Aorta (tissue), 5 donors: ENCODE measurements at regions of chr13 and their contacts with region 1.

Region 1: GRCh38 chr13:51803422-51804294 is at the start of gene DHRS12:
- DNase-seq: peak; percentile 95 to 97
- ATAC-seq: peak; percentile 93
- H3K4me3 ChIP-seq: peak within 1 kb of the TSS; percentile 61 to 62
- H3K27ac ChIP-seq: peak within 1 kb of the TSS; percentile 94 to 96
- H3K4me1 ChIP-seq: peaks cover 2 to 6% of the 10 kb centered on the region in 2 donors
- H3K27me3 ChIP-seq: no peaks in the 10 kb centered on the region
- total RNA-seq, gene DHRS12: 11.8 to 13.5 TPM

Region 2: GRCh38 chr13:51444922-51445321 is 358.7 kb before region 1 on chr13:
- intact Hi-C with region 1: loop called (anchors 5 to 10 kb)
- DNase-seq: no peak
- ATAC-seq: no peak
- H3K4me3 ChIP-seq: no peak overlapping the region
- H3K27ac ChIP-seq: no peak overlapping the region
- H3K4me1 ChIP-seq: peaks cover 0 to 3% of the 10 kb centered on the region in 2 donors
- H3K27me3 ChIP-seq: no peaks in the 10 kb centered on the region

Region 3: DNA sequence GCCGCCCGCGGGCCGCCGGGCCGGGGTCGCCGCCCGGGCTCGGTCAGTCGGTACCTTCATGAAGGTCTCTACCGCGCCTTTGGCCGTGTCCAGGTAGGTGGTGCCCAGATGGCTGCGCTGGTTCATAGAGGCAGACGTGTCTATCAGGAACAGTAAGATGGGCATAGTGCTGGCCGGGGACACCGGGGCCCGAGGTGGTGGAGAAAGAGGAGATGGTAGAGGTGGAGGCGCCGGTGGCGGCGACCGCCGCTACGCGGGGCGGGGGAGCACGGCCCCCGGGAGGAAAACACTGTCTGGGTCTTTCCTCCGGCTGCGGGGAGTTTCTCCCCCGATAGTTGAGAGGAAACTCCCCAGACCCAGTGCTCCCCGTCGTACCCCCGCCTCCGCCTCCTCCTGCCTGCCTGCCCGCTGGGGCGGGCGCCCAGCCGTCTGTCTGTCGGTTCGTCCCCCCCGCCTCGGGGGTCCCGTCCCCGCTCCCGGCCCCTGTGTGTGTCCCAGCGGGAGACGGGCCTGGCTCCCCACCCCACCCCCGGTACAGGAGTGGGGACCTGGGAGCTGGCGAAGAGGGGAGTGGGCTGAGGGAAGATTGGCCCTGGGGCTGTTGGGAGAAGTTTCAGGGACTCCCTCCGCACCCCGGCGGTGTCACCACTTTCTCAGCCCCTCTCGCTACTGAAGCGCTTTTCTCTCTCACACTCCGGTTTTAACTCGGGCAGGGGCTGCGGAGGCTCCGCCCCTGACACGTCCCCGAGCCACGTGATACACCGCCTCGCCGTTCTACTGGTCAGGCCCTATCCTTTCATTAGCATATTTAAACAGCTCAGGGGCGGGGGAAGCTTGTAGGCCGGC is 351.1 kb before region 1 on chr13 and contains the start of gene INTS6:
- intact Hi-C with region 1: loop called (anchors 5 to 10 kb)
- DNase-seq: peak; percentile 99
- ATAC-seq: peak; percentile 97
- H3K4me3 ChIP-seq: peak within 1 kb of the TSS; percentile 79 to 100
- H3K27ac ChIP-seq: peak within 1 kb of the TSS; percentile 88 to 100
- H3K4me1 ChIP-seq: peaks cover 0 to 3% of the 10 kb centered on the region in 2 donors
- H3K27me3 ChIP-seq: peaks cover 0 to 2% of the 10 kb centered on the region in 2 donors
- total RNA-seq, gene INTS6: 38.1 to 51.6 TPM

Region 4: DNA sequence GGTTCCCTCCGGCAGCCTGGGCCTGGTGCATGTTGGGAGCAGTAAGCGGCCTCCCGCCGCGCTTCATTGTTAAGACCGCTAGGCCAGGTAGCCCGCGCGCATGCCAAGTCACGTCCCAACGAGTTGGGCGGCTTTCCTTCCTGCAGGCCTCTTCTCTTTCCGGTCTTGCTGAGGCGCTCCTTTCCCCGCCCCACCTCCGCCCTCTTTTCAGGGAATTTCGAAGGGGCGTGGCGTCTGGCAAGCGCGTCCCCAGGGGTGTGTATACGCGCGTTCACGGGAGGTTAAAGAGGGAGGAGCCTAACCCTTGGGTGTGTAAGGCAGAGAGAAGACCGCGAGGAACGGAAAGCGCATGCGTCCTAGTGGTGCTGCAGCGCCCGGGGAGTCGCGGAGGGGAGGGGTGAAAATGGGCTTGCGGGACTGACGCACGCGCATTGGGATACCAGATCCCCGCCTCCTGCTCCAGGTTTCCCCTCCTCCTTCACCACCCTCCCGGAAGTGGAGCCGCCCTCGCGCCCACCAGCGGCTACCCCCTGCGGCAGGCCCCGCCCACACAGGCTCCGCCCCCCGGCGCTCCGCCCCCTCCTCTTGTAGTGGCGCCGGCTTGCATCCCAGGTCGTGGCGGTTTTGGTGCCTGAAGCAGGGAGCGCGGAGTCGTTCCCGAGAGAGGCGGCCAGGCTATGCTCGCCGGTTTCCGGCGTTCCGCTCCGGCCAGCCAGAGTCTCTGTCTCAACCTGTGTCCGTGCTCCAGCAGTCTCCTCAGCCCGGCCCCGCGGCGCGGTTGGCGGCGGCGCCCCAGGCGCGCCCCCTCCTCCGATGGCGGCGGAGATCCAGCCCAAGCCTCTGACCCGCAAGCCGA is 219.6 kb before region 1 on chr13 and contains the start of gene WDFY2:
- intact Hi-C with region 1: loop called (anchors 2 to 5 kb)
- DNase-seq: peak; percentile 100
- ATAC-seq: peak; percentile 98
- H3K4me3 ChIP-seq: peak within 1 kb of the TSS; percentile 38 to 95
- H3K27ac ChIP-seq: peak within 1 kb of the TSS; percentile 49 to 76
- H3K4me1 ChIP-seq: peaks cover 0 to 5% of the 10 kb centered on the region in 2 donors
- H3K27me3 ChIP-seq: no peaks in the 10 kb centered on the region
- total RNA-seq, gene WDFY2: 15.3 to 24.4 TPM

Region 5: GRCh38 chr13:51764184-51765141 is 39.2 kb before region 1 on chr13:
- intact Hi-C with region 1: loop called in 1 of 2 experiments (anchors 5 kb)
- DNase-seq: peak; percentile 75 to 78
- ATAC-seq: peak; percentile 92
- H3K4me3 ChIP-seq: no peak overlapping the region
- H3K27ac ChIP-seq: peak overlapping the region in 1 of 2 donors; percentile 94
- H3K4me1 ChIP-seq: no peaks in the 10 kb centered on the region
- H3K27me3 ChIP-seq: no peaks in the 10 kb centered on the region

Region 6: DNA sequence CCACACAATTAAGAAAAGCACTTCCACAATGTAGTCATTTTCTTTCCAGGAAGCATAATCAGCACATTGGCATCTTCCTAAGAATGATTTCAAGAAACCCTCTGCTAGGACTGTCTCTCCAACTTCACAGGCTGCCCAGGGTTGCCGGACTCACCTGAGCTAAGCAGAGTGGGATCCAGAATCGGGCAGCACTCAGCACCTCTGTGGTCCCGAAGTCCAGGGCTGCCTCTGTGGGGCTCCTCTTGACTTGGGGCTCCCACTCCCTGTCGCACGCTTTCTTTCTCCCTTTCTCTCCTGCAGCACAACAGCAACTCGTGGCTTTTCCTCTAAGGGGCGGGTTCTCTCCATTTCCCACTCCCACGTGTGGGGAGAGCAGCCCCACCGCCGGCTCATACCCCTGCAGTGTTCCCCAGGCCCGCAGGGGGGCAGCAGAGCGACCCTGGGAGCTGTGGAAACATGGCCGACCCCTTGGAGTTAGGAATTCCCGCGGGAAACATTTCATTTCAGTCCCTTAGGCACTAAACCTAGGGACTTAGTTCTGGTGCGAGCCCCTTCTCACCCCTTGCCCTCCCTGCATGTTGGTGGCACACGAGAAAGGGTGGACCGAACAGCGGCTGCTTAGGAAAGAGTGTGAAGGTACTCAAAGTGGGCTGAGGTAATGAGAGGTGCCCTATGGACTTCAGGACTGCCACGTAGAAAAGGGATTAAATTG is 41.4 kb after region 1 on chr13 and contains the start of gene TMEM272:
- intact Hi-C with region 1: no loop called
- DNase-seq: peak; percentile 64 to 83
- ATAC-seq: peak; percentile 70
- H3K4me3 ChIP-seq: no peak within 1 kb of the TSS
- H3K27ac ChIP-seq: no peak within 1 kb of the TSS
- H3K4me1 ChIP-seq: peaks cover 0 to 2% of the 10 kb centered on the region in 2 donors
- H3K27me3 ChIP-seq: no peaks in the 10 kb centered on the region
- total RNA-seq, gene TMEM272: 0.16 to 0.57 TPM

Region 7: GRCh38 chr13:52760077-52760476 is 956.4 kb after region 1 on chr13:
- intact Hi-C with region 1: no loop called
- DNase-seq: no peak
- ATAC-seq: no peak
- H3K4me3 ChIP-seq: no peak overlapping the region
- H3K27ac ChIP-seq: no peak overlapping the region
- H3K4me1 ChIP-seq: no peaks in the 10 kb centered on the region
- H3K27me3 ChIP-seq: no peaks in the 10 kb centered on the region